ENCODE measurements at regions of chr6 and their contacts with region 1.

Region 1: DNA sequence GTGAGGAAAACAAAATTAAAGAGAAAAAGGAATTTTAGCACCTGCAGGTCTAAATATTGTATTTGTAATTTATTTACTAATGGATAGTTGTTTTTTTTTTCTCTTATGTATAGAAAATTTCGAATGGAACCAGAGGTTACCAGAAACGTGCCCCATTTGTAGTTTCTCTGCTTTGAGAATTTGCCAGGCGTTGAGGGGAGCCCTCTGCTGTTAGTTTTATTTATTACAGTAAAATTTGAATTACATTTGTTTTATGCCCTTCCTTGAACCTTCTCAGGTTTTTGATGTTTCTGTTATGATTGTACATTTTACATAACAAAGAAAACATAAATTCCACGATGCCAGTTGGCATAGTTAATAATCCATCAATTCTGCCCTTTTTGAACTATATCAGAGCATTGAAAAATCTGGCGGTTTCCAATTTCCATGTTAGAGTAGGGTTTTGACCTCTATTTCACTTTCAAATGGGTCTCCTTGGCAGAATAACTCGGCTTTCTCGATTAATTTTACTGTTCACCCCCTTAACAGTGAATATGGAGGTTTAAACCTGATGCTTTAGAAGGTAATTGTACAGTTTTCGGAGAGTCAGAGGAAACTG is 35.1 kb upstream of the RFPL4B start:
- DNase-seq: no peak
- H3K4me3 ChIP-seq: no peak overlapping the region
- H3K27ac ChIP-seq: peak overlapping the region in 1 of 4 donors; percentile 7
- H3K4me1 ChIP-seq: peaks cover 0 to 17% (median 4%) of the 10 kb centered on the region in 4 donors
- H3K27me3 ChIP-seq: no peaks in the 10 kb centered on the region
- CTCF ChIP-seq: peak; percentile 40 to 71 (median 68)
- EP300 ChIP-seq: no peak
- POLR2A ChIP-seq: no peak

Region 2: GRCh38 chr6:112253841-112254816 is 57.9 kb before region 1 on chr6 and contains the start of gene LAMA4:
- intact Hi-C with region 1: loop called (anchors 5 kb)
- DNase-seq: peak; percentile 77
- H3K4me3 ChIP-seq: peak within 1 kb of the TSS; percentile 62 to 84 (median 76)
- H3K27ac ChIP-seq: peak within 1 kb of the TSS; percentile 88 to 95 (median 91)
- H3K4me1 ChIP-seq: peaks cover 0 to 41% (median 33%) of the 10 kb centered on the region in 4 donors
- H3K27me3 ChIP-seq: no peaks in the 10 kb centered on the region
- CTCF ChIP-seq: no peak
- EP300 ChIP-seq: peak in 1 of 4 donors; percentile 3
- POLR2A ChIP-seq: peak; percentile 6 to 49
- total RNA-seq, gene LAMA4: 95.3 to 225 (median 140) TPM

Region 3: DNA sequence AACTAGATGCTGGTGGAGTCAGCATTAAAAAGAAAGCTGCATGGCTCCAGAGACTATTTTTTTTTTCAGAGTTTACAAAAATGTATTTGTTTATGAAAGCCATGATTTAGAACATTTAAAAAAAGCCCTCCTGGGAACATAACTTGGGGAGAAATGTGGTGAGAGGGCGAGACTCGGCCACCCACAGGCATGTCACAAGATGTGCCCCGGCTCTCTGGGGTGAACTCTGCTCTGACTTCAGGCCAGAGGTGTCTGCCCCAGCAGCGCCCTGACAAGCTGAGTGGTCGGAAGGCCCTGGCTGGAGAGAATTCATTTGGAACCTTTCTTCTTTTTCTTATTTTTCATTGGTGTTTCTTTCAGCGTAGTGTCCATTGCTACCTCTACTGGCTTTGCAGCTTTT is 13.4 kb after region 1 on chr6:
- intact Hi-C with region 1: no loop called
- DNase-seq: no peak
- H3K4me3 ChIP-seq: no peak overlapping the region
- H3K27ac ChIP-seq: no peak overlapping the region
- H3K4me1 ChIP-seq: no peaks in the 10 kb centered on the region
- H3K27me3 ChIP-seq: no peaks in the 10 kb centered on the region
- CTCF ChIP-seq: no peak
- EP300 ChIP-seq: no peak
- POLR2A ChIP-seq: no peak

Region 4: DNA sequence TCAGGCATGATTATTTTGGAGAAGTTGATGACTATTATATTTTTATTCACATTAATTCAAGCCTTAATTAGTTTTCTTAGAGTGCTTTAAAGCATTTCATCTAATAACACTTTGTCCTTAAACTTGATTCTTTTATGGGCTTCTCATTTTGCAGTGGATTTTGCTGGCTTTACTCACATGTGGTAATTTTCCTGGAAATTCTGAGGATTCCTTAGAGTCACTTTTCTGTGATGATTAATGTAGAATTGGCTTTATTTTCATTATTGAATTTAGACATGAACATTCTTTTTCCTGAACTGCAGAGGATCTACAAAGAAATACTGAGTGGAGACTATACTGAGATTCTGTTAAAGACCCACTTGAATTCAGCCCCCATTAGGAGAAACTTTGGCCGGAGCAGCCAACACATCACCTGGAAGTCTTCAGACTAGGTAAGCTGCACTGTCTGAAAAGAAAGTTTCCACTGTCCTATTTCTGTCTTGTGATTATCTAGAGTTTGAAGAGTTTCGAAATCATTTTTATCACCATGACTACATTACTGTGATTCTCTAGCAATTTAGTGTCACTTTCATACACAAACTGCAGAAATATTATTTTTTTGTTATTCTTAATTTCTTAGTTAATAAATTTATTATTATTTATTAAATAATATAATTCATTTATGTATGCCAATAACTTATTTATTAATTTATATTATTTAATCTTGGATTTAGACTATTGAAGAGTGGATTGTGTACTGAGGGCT is 37.0 kb after region 1 on chr6:
- intact Hi-C with region 1: no loop called
- DNase-seq: no peak
- H3K4me3 ChIP-seq: no peak overlapping the region
- H3K27ac ChIP-seq: peak overlapping the region in 2 of 4 donors; percentile 30 to 38
- H3K4me1 ChIP-seq: no peaks in the 10 kb centered on the region
- H3K27me3 ChIP-seq: no peaks in the 10 kb centered on the region
- CTCF ChIP-seq: no peak
- EP300 ChIP-seq: no peak
- POLR2A ChIP-seq: no peak

Measured in sigmoid colon (tissue), 7 donors.